ENCODE measurements at regions of chr4 and their contacts with region 1.

Region 1: DNA sequence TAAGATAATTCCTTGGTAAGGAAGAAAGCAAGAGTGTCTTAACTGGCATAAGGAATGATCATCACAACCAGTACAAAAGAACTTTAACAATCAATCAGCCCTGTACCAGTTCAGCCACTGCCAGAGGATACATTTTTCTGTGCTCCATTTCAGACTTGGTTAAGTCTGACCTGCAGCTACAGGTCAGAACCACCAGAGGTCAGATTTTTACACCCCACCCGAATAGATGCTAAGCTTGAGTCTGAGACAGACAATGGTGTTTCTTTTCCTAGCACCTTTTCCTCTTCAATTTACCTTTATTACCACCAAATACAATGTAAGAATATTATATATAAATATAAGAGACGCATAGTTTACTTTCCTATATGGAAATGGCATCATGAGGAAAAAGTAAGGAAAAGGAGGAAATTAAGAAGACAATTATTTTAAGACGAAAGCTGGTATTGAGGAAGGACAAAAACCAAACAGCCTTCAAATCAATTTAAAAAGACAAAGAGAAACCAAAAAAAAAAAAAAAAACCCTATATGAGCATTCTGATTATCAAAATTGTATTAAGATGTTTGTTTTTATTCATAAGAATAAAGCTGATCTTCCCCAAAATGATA is 215.3 kb upstream of the TTC29 start:
- DNase-seq: no peak
- H3K4me3 ChIP-seq: no peak overlapping the region
- H3K27ac ChIP-seq: no peak overlapping the region
- H3K4me1 ChIP-seq: peaks cover 0 to 8% (median 0%) of the 10 kb centered on the region in 4 donors
- H3K27me3 ChIP-seq: peaks cover 15% of the 10 kb centered on the region
- CTCF ChIP-seq: peak; percentile 67 to 74 (median 73)
- EP300 ChIP-seq: no peak
- POLR2A ChIP-seq: no peak

Region 2: DNA sequence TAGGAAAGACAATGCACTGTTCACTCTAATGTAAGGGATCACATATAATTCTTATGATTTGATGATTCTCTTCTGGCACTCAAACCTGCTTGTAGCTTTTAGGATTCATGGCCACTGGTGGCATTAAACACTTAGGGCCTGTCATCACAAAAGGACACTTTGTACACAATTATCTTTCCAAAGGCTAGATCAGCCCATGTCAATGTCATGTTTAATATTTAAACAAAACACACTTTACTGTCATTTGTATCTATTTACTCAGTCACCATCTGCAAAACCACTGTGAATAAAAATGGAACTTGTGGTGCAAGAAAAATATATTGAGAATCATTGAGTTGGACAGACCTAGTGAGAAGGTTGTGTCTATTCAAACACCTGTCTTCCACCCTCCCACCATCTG is 131.7 kb before region 1 on chr4:
- in situ Hi-C with region 1: no loop called
- intact Hi-C with region 1: no loop called
- DNase-seq: no peak
- H3K4me3 ChIP-seq: no peak overlapping the region
- H3K27ac ChIP-seq: no peak overlapping the region
- H3K4me1 ChIP-seq: no peaks in the 10 kb centered on the region
- H3K27me3 ChIP-seq: no peaks in the 10 kb centered on the region
- CTCF ChIP-seq: no peak
- EP300 ChIP-seq: no peak
- POLR2A ChIP-seq: no peak

Region 3: DNA sequence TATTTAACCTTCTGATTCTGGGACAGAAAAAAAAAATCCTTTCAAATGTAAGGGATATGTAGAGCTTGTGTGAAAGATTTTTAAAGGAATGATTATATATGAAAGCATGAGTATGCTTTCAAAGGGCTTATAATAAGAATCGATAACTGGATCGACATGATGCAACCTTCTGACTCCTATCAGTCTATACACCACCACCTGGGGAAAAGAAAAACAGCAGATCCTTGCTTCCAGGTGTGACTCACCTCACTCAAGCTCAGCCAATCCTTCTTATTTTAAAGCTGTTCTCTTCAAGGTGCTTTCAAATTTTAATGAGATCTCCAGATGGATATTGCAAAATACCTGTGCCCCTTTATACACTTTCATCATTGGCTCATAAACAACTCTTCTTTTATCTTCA is 217.8 kb after region 1 on chr4:
- in situ Hi-C with region 1: loop called in 1 of 4 experiments (anchors 25 kb)
- intact Hi-C with region 1: no loop called
- DNase-seq: no peak
- H3K4me3 ChIP-seq: no peak overlapping the region
- H3K27ac ChIP-seq: no peak overlapping the region
- H3K4me1 ChIP-seq: no peaks in the 10 kb centered on the region
- H3K27me3 ChIP-seq: no peaks in the 10 kb centered on the region
- CTCF ChIP-seq: peak in 4 of 5 experiments; percentile 28 to 44 (median 33)
- EP300 ChIP-seq: no peak
- POLR2A ChIP-seq: no peak

Region 4: GRCh38 chr4:147913137-147913536 is 752.1 kb after region 1 on chr4:
- in situ Hi-C with region 1: no loop called
- intact Hi-C with region 1: loop called (anchors 5 kb)
- DNase-seq: no peak
- H3K4me3 ChIP-seq: no peak overlapping the region
- H3K27ac ChIP-seq: no peak overlapping the region
- H3K4me1 ChIP-seq: no peaks in the 10 kb centered on the region
- H3K27me3 ChIP-seq: no peaks in the 10 kb centered on the region
- CTCF ChIP-seq: no peak
- EP300 ChIP-seq: no peak
- POLR2A ChIP-seq: no peak